H1 (cell line): ENCODE measurements at regions of chr1 and their contacts with region 1.

Region 1: GRCh38 chr1:62247391-62248168 is 52.9 kb downstream of the L1TD1 start:
- DNase-seq: no peak
- H3K4me3 ChIP-seq: no peak overlapping the region
- H3K27ac ChIP-seq: no peak overlapping the region
- H3K4me1 ChIP-seq: peaks cover 0 to 6% (median 3%) of the 10 kb centered on the region in 4 experiments; a peak in 2 of 7 replicates
- H3K27me3 ChIP-seq: no peaks in the 10 kb centered on the region; a peak in 1 of 7 replicates
- CTCF ChIP-seq: no peak
- EP300 ChIP-seq: no peak
- POLR2A ChIP-seq: no peak
- RAD21 ChIP-seq: no peak

Region 2: GRCh38 chr1:62093261-62093660 is 154.3 kb before region 1 on chr1:
- CTCF ChIA-PET with region 1: no interaction called
- POLR2A ChIA-PET with region 1: no interaction called
- DNase-seq: no peak
- H3K4me3 ChIP-seq: no peak overlapping the region
- H3K27ac ChIP-seq: no peak overlapping the region
- H3K4me1 ChIP-seq: no peaks in the 10 kb centered on the region
- H3K27me3 ChIP-seq: no peaks in the 10 kb centered on the region
- CTCF ChIP-seq: no peak
- EP300 ChIP-seq: no peak
- POLR2A ChIP-seq: no peak
- RAD21 ChIP-seq: no peak

Region 3: DNA sequence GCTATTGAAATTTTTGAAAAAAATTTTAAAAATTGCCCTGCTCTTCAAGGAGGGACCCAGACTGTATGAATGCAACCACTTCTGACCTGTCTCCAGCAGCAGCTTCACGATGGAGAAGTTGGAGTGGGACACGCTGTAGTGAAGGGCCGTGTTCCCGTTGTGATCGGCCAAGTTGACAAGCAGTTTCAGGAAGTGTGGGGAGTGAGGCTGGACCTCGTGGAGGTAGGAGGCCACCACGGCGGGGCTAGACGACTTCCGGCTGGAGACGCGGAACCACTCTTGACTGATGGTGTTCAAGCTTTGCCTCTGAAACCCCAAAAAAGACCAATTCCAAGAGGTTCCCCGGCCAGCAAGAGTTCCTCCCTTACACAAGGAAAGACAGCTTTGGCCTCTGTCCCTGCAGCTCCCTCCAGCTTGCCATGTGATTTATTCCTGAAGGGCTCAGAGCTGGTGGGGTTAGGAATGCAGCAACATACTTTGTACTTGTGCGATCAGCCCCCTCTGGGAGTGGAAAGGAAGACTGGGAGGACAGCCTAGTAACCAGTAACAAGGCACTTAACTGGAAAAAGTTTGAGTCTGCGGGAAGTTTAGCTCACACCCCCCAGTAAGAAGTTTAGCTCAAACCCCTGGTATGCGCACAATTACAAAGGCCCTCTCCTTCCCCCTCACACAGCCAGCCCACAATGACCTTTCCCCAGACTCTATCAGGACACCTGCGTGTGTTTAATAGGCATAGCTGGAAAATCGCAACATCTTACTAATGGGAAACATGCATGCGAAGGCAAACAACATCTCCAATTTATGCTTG is 15.6 kb after region 1 on chr1:
- CTCF ChIA-PET with region 1: interaction called, 19 read pairs
- POLR2A ChIA-PET with region 1: interaction called, 3 read pairs
- DNase-seq: no peak
- H3K4me3 ChIP-seq: no peak overlapping the region
- H3K27ac ChIP-seq: no peak overlapping the region
- H3K4me1 ChIP-seq: peaks cover 0 to 5% (median 2%) of the 10 kb centered on the region in 4 experiments; a peak in 6 of 7 replicates
- H3K27me3 ChIP-seq: no peaks in the 10 kb centered on the region
- CTCF ChIP-seq: no peak
- EP300 ChIP-seq: no peak
- POLR2A ChIP-seq: no peak
- RAD21 ChIP-seq: no peak

Region 4: DNA sequence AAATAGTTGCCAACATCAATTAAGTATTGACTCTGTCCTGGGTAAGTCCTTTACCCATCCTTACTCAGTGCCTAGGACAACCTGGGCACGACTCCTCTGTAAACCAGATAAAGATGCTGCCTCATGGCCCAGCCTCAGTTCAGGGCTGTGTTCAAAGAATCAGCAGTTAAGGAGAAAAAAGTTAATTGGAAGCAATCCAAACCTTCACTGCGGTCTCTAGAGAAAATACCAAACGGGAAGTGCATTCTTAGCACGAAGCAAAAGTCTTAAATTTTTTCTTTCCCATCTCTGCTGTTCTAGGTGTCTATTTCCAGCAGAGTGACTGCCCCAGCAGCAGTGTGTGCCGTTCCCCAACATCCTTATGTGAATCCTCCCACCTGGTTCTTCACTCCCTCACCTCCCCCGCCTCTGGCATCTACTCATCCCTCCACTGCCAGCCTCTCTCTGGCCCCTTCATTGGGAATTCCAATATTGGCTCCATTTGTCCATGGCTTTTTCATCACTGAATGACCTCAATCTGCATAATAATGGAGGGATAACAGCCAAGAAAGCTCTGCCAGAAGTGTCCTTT is 48.4 kb after region 1 on chr1:
- CTCF ChIA-PET with region 1: no interaction called
- POLR2A ChIA-PET with region 1: no interaction called
- DNase-seq: no peak
- H3K4me3 ChIP-seq: no peak overlapping the region
- H3K27ac ChIP-seq: no peak overlapping the region
- H3K4me1 ChIP-seq: peaks cover 4 to 12% (median 8%) of the 10 kb centered on the region in 4 experiments; a peak in 5 of 7 replicates
- H3K27me3 ChIP-seq: no peaks in the 10 kb centered on the region; a peak in 2 of 7 replicates
- CTCF ChIP-seq: no peak
- EP300 ChIP-seq: no peak
- POLR2A ChIP-seq: no peak
- RAD21 ChIP-seq: no peak

Region 5: DNA sequence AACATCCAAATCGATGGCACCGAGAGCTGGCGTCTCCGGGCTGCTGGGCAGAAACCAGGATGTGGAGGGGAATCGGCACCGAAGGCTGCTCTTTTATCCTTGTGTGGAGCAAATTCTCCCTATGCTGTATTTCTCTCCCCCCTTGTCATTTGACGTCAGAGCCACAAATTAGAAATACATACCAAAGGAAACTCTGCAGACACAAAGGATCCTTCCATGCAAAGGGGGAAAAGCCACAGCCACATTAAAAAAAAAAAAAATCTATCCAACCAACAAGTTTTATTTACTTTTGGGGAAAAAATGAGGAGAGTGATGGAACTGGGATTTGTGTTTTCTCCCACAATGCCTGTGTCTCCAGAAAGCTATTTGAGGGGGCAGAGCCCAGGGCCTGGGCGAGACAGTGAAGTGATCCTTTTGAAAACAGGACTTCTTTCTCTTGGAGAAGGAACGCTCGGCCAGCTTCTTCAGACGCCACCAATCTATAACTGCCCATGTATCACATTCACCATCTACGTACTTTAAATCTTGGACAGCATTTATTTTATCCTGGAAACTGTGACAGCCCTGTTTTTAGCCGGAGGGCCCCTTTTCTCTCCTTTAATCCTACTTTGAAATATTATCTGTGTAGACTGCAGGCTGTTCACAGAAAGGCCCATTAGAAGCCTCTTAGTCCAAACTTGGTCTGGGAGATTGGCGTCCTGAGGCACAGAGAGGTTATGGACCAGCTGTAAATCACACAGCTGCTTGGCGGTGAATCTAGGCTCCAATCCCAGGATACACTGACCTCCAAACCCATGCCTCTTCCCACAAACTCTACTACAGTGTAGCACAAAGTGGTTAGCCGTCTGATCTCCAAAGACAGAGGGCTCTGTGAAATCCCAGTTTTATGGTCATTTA is 67.1 kb after region 1 on chr1:
- CTCF ChIA-PET with region 1: no interaction called
- POLR2A ChIA-PET with region 1: no interaction called
- DNase-seq: no peak
- H3K4me3 ChIP-seq: no peak overlapping the region
- H3K27ac ChIP-seq: no peak overlapping the region
- H3K4me1 ChIP-seq: no peaks in the 10 kb centered on the region; a peak in 1 of 7 replicates
- H3K27me3 ChIP-seq: peaks cover 24 to 37% (median 30%) of the 10 kb centered on the region in 4 experiments
- CTCF ChIP-seq: no peak
- EP300 ChIP-seq: no peak
- POLR2A ChIP-seq: no peak
- RAD21 ChIP-seq: no peak